K562 (cell line): ENCODE measurements at regions of chr15 and their contacts with region 1.

Region 1: DNA sequence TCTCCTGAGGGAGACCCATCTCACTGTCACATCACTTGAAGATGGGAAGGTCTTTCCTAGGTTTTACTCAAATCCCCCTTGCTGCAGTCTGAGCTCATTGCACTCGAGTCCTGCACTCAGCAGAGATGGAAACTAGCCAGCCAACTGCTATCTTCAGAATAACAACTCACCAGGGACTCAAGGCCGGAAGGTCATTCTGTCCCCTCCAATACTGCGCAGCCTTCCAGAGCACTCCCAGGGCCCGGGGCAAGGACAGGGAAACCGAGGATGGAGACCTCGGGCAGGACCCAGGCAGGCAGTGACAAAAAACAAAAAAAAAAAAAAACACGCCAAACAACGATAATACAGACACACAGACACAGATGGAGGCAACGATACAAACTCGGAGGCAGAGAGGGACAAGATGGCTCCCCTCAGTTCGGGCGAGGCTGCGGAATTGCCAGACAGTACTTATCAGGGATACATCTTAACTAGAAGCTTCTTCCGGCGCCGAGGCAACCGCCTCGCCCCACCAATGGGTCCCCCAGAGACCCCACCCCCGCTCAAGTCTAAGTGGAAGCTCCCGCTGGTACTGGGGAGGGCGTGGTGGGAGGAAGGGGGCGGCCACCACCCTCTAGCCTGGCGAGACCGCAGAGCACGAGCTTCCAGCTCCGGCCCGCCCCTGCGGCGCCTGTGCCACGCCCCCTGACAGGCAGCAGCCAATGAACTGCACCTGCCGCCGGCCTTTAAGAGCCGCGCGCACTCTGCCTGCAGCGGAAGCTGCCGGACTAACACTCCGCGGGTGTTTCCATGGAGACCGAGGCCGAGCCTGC is 7.0 kb upstream of the MAP1A start:
- DNase-seq: peak; percentile 95 to 99 (median 96)
- ATAC-seq: peak; percentile 96
- H3K4me3 ChIP-seq: peak overlapping the region; percentile 58
- H3K27ac ChIP-seq: peak overlapping the region; percentile 93
- H3K4me1 ChIP-seq: peaks cover 17 to 60% of the 10 kb centered on the region in 2 experiments
- H3K27me3 ChIP-seq: no peaks in the 10 kb centered on the region
- CTCF ChIP-seq: peak; percentile 38 to 41 (median 40); a peak in 5 of 6 replicates
- EP300 ChIP-seq: no peak; the same call in 1 of the 2 replicates
- POLR2A ChIP-seq: peak; percentile 86
- RAD21 ChIP-seq: peak in 1 of 2 experiments; percentile 21; a peak in 1 of 4 replicates

Region 2: GRCh38 chr15:43370975-43371974 is 139.1 kb before region 1 on chr15 and contains the starts of genes TUBGCP4 and ZSCAN29:
- CTCF ChIA-PET with region 1: interaction called, 8 read pairs
- POLR2A ChIA-PET with region 1: no interaction called
- in situ Hi-C with region 1: no loop called
- intact Hi-C with region 1: loop called (anchors 5 kb)
- DNase-seq: peak; percentile 91 to 96 (median 96)
- ATAC-seq: peak; percentile 92
- H3K4me3 ChIP-seq: peak within 1 kb of the TSS; percentile 74
- H3K27ac ChIP-seq: peak within 1 kb of the TSS; percentile 89
- H3K4me1 ChIP-seq: peaks cover 13 to 16% of the 10 kb centered on the region in 2 experiments; a peak in 4 of 5 replicates
- H3K27me3 ChIP-seq: no peaks in the 10 kb centered on the region
- CTCF ChIP-seq: peak; percentile 66 to 72 (median 71)
- EP300 ChIP-seq: no peak
- POLR2A ChIP-seq: peak; percentile 90
- RAD21 ChIP-seq: no peak
- polyA plus RNA-seq, gene TUBGCP4: 10.7 to 13.1 TPM
- polyA plus RNA-seq, gene ZSCAN29: 2.5 to 2.7 TPM

Region 3: GRCh38 chr15:43440721-43441281 is 69.6 kb before region 1 on chr15:
- CTCF ChIA-PET with region 1: interaction called, 4 read pairs
- POLR2A ChIA-PET with region 1: interaction called, 6 read pairs
- in situ Hi-C with region 1: no loop called
- intact Hi-C with region 1: loop called (anchors 1 kb)
- DNase-seq: peak; percentile 49 to 87 (median 68)
- ATAC-seq: peak; percentile 99
- H3K4me3 ChIP-seq: no peak overlapping the region
- H3K27ac ChIP-seq: peak overlapping the region; percentile 51
- H3K4me1 ChIP-seq: peaks cover 3% of the 10 kb centered on the region in 2 experiments; a peak in 2 of 5 replicates
- H3K27me3 ChIP-seq: no peaks in the 10 kb centered on the region
- CTCF ChIP-seq: peak; percentile 67 to 87 (median 72)
- EP300 ChIP-seq: peak; percentile 79
- POLR2A ChIP-seq: no peak
- RAD21 ChIP-seq: peak; percentile 91 to 93

Region 4: DNA sequence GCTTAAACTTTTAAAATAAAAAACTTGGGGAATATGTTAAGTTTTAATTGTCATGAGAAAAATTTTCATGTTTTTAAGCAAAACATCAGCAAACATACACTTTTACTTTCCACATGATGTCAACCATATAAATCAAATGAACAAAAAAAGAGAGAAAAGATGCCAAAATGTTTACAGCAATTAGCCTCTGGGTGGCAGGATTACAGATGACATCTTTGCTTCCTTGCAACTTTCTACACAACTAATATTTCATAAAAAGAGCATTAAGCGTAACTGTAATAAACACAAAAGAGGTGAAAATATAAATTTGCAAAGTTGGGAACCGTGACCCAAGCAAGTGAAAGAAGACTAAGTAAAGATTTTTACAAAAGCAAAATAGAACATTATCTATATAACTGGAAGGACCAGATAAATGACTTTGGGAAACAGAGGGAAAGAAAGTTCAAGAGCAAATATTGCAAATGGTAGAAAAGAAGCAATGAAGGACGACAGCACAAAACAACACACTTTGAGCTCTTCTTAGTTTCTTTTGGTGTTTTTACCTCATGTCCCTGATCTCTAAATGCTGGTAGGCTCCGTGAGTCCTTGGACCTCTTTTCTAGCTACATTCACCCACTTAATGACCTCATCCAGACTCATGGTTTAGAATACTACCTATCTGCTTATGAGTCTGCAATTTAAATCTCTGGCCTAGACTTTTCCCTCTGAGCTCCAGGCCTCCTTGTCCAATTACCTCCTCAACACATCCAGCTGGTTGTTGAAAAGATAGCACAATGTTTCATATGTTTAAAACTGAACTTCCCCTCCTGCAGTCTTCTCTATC is 26.9 kb before region 1 on chr15:
- CTCF ChIA-PET with region 1: interaction called, 3 read pairs
- POLR2A ChIA-PET with region 1: interaction called, 3 read pairs
- in situ Hi-C with region 1: no loop called
- intact Hi-C with region 1: loop called (anchors 2 kb)
- DNase-seq: peak in 2 of 4 experiments; percentile 19 to 35
- ATAC-seq: peak; percentile 75
- H3K4me3 ChIP-seq: no peak overlapping the region
- H3K27ac ChIP-seq: peak overlapping the region; percentile 47
- H3K4me1 ChIP-seq: peaks cover 8 to 10% of the 10 kb centered on the region in 2 experiments; a peak in 4 of 5 replicates
- H3K27me3 ChIP-seq: no peaks in the 10 kb centered on the region
- CTCF ChIP-seq: peak in 2 of 3 experiments; percentile 11 to 49; a peak in 3 of 6 replicates
- EP300 ChIP-seq: no peak
- POLR2A ChIP-seq: no peak
- RAD21 ChIP-seq: peak; percentile 43 to 60

Region 5: DNA sequence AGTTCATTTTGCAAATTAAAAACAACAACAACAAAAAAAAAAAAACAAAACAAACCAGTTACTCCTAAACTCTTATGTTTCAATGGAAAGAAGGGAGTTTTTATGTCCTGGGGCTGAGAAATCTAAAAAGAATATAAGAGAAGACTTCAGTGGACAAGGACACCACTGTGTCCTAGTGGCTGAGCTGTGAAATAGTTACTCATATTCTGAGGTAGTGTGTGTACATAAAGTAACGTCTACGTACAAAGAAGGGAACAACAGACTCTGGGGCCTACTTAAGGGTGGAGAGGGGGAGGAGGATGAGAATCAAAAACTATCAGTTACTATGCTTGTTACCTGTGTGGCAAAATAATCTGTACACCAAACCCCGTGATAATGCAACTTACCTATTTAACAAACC is 11.4 kb before region 1 on chr15:
- CTCF ChIA-PET with region 1: interaction called, 4 read pairs
- POLR2A ChIA-PET with region 1: interaction called, 21 read pairs
- in situ Hi-C with region 1: no loop called
- intact Hi-C with region 1: no loop called
- DNase-seq: peak in 1 of 4 experiments; percentile 19
- ATAC-seq: peak; percentile 86
- H3K4me3 ChIP-seq: no peak overlapping the region
- H3K27ac ChIP-seq: no peak overlapping the region
- H3K4me1 ChIP-seq: peaks cover 0 to 4% of the 10 kb centered on the region in 2 experiments; a peak in 3 of 5 replicates
- H3K27me3 ChIP-seq: no peaks in the 10 kb centered on the region
- CTCF ChIP-seq: peak in 1 of 3 experiments; percentile 32; a peak in 2 of 6 replicates
- EP300 ChIP-seq: no peak
- POLR2A ChIP-seq: no peak
- RAD21 ChIP-seq: no peak

Region 6: DNA sequence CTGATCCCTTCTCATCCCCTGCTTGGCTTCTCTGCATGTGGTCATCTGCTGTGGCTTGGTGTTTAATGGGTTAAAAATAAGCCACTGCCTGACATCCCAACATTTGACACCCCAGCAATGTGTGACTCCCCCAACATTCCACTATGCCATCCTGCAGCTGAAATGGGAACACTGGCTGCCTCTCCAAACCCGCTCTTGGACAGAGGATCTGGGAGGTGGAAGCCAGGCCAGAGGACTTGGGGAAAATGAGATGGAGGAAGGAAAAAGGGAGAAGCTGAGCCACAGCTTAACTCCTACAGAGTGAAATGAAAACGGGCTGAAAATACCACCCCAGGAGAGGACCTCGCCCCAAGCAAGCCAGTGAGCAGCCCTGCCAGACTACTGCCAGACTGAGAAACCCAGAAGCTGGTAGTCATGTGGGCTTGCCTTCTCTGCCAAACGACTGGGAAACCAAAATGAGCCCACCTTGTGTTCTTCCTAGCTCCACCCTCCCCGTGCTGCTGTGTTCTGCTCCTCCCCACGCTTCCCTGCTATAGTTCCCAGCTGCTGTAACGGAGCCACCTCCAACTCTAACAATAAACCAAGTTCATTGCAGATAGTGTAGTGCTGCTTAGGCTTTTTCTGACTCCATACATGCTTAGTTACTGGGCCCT is 20.7 kb after region 1 on chr15:
- CTCF ChIA-PET with region 1: no interaction called
- POLR2A ChIA-PET with region 1: interaction called, 63 read pairs
- in situ Hi-C with region 1: no loop called
- intact Hi-C with region 1: no loop called
- DNase-seq: no peak
- ATAC-seq: peak; percentile 42
- H3K4me3 ChIP-seq: no peak overlapping the region
- H3K27ac ChIP-seq: no peak overlapping the region
- H3K4me1 ChIP-seq: peaks cover 4 to 12% of the 10 kb centered on the region in 2 experiments; a peak in 3 of 5 replicates
- H3K27me3 ChIP-seq: no peaks in the 10 kb centered on the region
- CTCF ChIP-seq: no peak
- EP300 ChIP-seq: no peak
- POLR2A ChIP-seq: no peak
- RAD21 ChIP-seq: no peak